Heart left ventricle (tissue), 16 donors: ENCODE measurements at regions of chr20 and their contacts with region 1.

Region 1: GRCh38 chr20:24755411-24755922 is 193.6 kb upstream of the CST7 start:
- DNase-seq: no peak
- ATAC-seq: no peak
- H3K4me3 ChIP-seq: no peak overlapping the region
- H3K27ac ChIP-seq: no peak overlapping the region
- H3K4me1 ChIP-seq: no peaks in the 10 kb centered on the region
- H3K27me3 ChIP-seq: peaks cover 0 to 10% (median 0%) of the 10 kb centered on the region in 9 donors
- CTCF ChIP-seq: no peak
- POLR2A ChIP-seq: no peak

Region 2: DNA sequence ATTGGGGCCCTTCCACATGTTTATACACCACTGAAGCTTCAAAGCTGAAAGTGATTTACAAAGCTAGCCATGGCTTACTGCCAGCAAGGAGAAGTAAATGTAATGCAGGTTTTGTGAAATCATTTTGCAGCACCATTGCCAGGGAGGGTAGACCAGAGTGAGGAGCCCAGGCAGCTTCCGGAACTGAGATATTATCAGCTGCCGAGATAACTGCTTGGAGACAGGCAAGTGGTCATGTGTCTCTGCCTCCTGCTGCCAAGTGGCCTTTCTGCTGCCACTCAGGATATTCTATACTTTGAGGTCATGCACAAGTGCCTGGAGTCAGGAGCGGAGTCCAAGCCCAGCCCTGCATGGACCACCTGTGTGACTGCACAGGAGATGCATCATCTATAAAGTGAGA is 125.8 kb before region 1 on chr20:
- intact Hi-C with region 1: loop called in 1 of 10 experiments (anchors 10 kb)
- DNase-seq: no peak
- ATAC-seq: no peak
- H3K4me3 ChIP-seq: no peak overlapping the region
- H3K27ac ChIP-seq: no peak overlapping the region
- H3K4me1 ChIP-seq: peaks cover 0 to 32% (median 5%) of the 10 kb centered on the region in 12 donors
- H3K27me3 ChIP-seq: no peaks in the 10 kb centered on the region
- CTCF ChIP-seq: no peak
- POLR2A ChIP-seq: no peak